ENCODE measurements at regions of chr20 and their contacts with region 1.

Region 1: GRCh38 chr20:50460460-50461267 is 49.5 kb upstream of the PTPN1 start:
- DNase-seq: peak; percentile 94
- ATAC-seq: peak; percentile 93

Region 2: DNA sequence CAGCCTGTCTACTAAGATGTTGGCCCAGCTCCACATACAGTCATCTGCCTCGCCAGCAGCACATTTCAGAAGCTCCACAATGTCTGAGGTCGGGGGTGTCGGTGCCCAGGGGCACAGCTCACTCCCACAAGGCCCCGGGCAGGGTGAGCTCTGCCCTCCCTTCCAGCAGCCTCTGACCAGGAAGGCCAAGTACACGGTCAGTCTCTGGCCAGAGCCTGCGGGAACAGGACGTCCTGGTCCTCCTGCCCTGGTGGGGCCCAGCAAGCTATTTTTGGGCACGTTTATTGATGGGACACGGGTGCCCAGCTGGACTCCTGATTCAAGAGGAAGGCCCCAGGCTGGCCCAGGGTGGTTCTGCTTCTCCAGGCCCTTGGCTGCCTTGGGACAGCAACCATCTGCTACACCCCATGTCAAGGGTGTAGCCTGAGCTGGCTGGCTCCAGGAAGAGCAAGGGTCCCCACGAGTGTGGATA is 65.4 kb before region 1 on chr20:
- intact Hi-C with region 1: loop called (anchors 2 kb)
- DNase-seq: peak; percentile 91
- ATAC-seq: peak; percentile 84